ENCODE measurements at regions of chrX and their contacts with region 1.

Region 1: DNA sequence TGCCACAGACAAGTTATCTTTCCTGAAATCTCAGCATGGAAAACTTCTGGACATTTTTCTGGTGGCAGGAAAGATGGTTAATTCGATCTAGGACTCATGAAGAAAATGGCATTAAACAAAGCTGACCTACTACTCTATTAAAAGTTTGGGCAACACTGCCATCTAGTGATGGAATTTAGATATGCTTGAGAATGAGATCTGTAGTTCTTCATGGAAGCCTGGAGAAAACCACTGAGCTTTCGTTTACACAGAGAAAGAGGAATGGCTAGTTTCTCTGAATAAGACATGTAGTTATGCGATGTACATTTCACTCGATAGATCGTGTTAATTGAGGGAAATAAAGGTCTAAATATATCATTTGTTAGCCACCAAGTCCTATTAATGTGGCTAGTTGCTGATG is 51.7 kb upstream of the CHRDL1 start:
- DNase-seq: peak; percentile 64

Region 2: DNA sequence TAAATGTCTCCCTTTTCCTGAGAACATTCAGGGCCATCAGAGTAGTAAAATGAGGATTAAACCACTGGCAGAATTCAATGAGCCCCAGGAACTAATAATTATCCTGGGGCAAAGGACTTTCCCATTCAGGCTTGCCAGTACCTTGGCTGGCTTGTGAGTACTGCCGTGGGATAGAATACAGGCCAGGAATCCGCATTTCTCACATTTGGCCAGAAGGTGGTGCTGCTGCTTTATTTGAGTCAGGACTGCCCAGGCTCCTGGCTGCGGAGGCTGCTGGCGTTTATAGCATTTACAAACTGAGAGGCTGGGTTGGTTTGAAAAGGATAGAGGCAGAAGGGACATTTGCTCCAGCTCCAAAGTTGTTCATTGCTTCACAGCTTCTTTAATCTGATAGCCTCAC is 397.3 kb before region 1 on chrX:
- CTCF ChIA-PET with region 1: interaction called, 10 read pairs
- POLR2A ChIA-PET with region 1: no interaction called
- DNase-seq: peak; percentile 87

Region 3: GRCh38 chrX:110836982-110837381 is 10.4 kb before region 1 on chrX:
- CTCF ChIA-PET with region 1: interaction called, 13 read pairs
- POLR2A ChIA-PET with region 1: interaction called, 3 read pairs
- DNase-seq: peak; percentile 42

Measured in HEK293T (cell line).